H1 (cell line): ENCODE measurements at regions of chr12 and their contacts with region 1.

Region 1: DNA sequence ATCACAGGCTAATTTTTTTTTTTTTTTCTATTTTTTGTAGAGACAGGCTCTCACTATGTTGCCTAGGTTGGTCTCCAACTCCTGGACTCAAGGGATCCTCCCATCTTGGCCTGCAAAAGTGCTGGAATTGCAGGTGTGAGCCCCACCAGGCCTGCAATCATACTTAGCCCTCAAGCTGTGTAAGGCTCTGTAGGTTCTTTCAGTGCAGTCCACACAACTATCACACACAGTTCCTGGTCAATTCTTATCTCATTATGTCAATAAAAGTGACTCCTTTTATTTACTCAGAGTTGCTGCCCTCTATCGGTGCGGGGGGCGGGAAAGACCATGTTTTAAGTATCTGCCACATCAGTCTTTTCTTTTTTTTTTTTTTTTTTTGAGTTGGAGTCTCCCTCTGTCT is 29.0 kb downstream of the SLC2A3 start:
- DNase-seq: peak; percentile 49 to 58
- H3K4me3 ChIP-seq: no peak overlapping the region
- H3K27ac ChIP-seq: peak overlapping the region; percentile 82
- H3K4me1 ChIP-seq: peaks cover 2 to 12% (median 6%) of the 10 kb centered on the region in 4 experiments; a peak in 5 of 7 replicates
- H3K27me3 ChIP-seq: no peaks in the 10 kb centered on the region
- CTCF ChIP-seq: peak in 2 of 3 experiments; percentile 34 to 49; a peak in 3 of 4 replicates
- EP300 ChIP-seq: no peak
- POLR2A ChIP-seq: no peak
- RAD21 ChIP-seq: peak; percentile 33 to 56; a peak in 3 of 4 replicates

Region 2: GRCh38 chr12:7303230-7303629 is 603.8 kb before region 1 on chr12:
- CTCF ChIA-PET with region 1: no interaction called
- POLR2A ChIA-PET with region 1: no interaction called
- DNase-seq: no peak
- H3K4me3 ChIP-seq: no peak overlapping the region
- H3K27ac ChIP-seq: no peak overlapping the region
- H3K4me1 ChIP-seq: peaks cover 0 to 7% (median 2%) of the 10 kb centered on the region in 4 experiments; a peak in 2 of 7 replicates
- H3K27me3 ChIP-seq: no peaks in the 10 kb centered on the region
- CTCF ChIP-seq: no peak
- EP300 ChIP-seq: no peak
- POLR2A ChIP-seq: no peak
- RAD21 ChIP-seq: no peak

Region 3: DNA sequence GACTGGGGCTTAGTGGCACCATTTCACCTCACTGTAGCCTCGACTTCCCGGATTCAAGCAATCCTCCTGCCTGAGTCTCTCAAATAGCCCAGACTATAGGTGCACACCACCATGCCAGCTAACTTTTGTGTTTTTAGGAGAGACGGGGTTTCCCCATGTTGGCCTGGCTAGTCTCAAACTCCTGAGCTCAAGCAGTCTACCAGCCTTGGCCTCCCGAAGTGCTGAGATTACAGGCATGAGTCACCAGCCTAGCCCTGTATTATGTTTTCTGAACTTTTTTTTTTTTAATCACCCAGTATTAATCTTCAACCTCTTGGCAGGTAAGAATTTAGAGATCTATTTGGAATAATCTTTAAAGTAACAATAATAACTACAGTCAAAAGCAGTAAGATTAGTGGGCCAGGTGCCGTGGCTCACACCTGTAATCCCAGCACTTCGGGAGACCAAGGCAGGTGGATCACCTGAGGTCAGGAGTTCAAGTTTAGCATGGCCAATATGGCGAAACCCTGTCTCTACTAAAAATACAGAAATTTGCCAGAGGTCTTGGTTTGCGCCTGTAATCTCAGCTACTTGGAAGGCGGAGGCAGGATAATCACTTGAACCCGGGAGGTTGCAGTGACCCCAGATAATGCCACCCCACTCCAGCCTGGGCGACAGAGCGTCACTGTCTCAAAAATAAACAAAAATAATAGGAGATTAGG is 109.2 kb before region 1 on chr12:
- CTCF ChIA-PET with region 1: interaction called, 3 read pairs
- POLR2A ChIA-PET with region 1: interaction called, 23 read pairs
- DNase-seq: no peak
- H3K4me3 ChIP-seq: peak overlapping the region in 1 of 4 experiments; percentile 44; a peak in 1 of 8 replicates
- H3K27ac ChIP-seq: peak overlapping the region; percentile 69; the same call in 1 of the 2 replicates
- H3K4me1 ChIP-seq: peaks cover 6 to 18% (median 13%) of the 10 kb centered on the region in 4 experiments
- H3K27me3 ChIP-seq: no peaks in the 10 kb centered on the region
- CTCF ChIP-seq: no peak
- EP300 ChIP-seq: no peak
- POLR2A ChIP-seq: no peak
- RAD21 ChIP-seq: no peak

Region 4: DNA sequence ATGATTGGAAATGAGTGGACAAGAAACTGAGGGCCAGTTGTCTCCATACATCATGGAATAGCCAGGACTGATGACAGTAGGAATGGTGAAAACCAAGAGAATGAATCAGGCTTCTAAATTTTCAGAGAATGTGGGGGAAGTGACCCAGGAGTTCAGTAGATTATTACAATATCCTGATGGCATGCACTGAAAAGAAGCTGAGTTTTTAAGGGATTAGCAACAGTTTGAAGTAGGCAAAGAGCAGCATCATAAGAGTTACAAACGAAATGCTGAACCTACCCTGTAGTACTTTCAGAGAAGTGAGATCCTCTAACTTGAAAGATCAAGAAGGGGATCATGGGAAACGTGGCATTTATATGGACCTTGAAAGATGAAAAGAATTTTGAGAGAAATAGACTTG is 47.5 kb before region 1 on chr12:
- CTCF ChIA-PET with region 1: interaction called, 11 read pairs
- POLR2A ChIA-PET with region 1: interaction called, 9 read pairs
- DNase-seq: no peak
- H3K4me3 ChIP-seq: no peak overlapping the region
- H3K27ac ChIP-seq: no peak overlapping the region
- H3K4me1 ChIP-seq: peaks cover 0 to 11% (median 3%) of the 10 kb centered on the region in 4 experiments; a peak in 3 of 7 replicates
- H3K27me3 ChIP-seq: no peaks in the 10 kb centered on the region
- CTCF ChIP-seq: no peak
- EP300 ChIP-seq: no peak
- POLR2A ChIP-seq: no peak
- RAD21 ChIP-seq: no peak

Region 5: GRCh38 chr12:7884689-7885088 is 22.3 kb before region 1 on chr12:
- CTCF ChIA-PET with region 1: interaction called, 6 read pairs
- POLR2A ChIA-PET with region 1: interaction called, 40 read pairs
- DNase-seq: no peak
- H3K4me3 ChIP-seq: no peak overlapping the region
- H3K27ac ChIP-seq: no peak overlapping the region
- H3K4me1 ChIP-seq: peaks cover 0 to 2% (median 0%) of the 10 kb centered on the region in 4 experiments; a peak in 1 of 7 replicates
- H3K27me3 ChIP-seq: no peaks in the 10 kb centered on the region
- CTCF ChIP-seq: no peak
- EP300 ChIP-seq: no peak
- POLR2A ChIP-seq: no peak
- RAD21 ChIP-seq: no peak

Region 6: DNA sequence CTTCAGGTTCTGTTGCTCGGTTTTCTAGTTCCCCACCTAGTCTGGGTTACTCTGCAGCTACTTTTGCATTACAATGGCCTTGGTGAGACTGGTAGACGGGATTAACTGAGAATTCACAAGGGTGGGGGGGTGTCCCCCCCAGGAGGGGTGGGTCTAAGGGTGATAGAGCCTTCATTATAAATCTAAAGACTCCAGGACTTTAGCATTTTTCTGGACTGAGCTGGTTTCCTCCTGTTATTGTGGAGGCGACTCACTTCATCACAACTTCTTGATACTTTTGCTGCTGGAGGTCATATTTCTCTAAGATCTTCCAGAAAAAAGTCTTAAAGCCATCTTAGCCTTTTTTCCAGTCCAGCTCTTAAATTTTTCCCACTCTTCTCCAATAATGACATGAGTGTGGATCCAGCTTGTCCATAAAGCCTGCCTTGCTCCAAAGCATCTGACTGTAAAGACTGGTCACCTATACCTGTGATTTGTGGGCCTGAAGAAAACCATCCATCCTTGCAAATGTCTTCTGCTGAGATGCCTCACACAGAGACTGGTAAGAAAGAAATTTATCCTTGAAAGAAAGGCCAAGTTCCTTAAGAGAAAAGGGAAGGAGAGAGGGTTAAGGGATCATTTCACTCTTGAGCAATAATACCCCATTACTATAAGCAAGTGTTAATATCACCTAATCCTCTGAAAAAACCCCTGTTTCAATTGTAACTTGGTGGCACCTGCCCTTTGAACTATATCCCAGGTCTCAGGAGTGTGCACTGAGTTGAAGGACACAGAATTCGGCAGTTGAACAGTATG is 14.6 kb before region 1 on chr12:
- CTCF ChIA-PET with region 1: interaction called, 37 read pairs
- POLR2A ChIA-PET with region 1: interaction called, 40 read pairs
- DNase-seq: no peak
- H3K4me3 ChIP-seq: peak overlapping the region in 1 of 4 experiments; percentile 22; a peak in 1 of 8 replicates
- H3K27ac ChIP-seq: no peak overlapping the region
- H3K4me1 ChIP-seq: peaks cover 4 to 15% (median 8%) of the 10 kb centered on the region in 4 experiments; a peak in 5 of 7 replicates
- H3K27me3 ChIP-seq: no peaks in the 10 kb centered on the region
- CTCF ChIP-seq: no peak
- EP300 ChIP-seq: no peak
- POLR2A ChIP-seq: no peak
- RAD21 ChIP-seq: no peak

Region 7: GRCh38 chr12:7923241-7924236 is 16.5 kb after region 1 on chr12:
- CTCF ChIA-PET with region 1: interaction called, 13 read pairs
- POLR2A ChIA-PET with region 1: interaction called, 20 read pairs
- DNase-seq: no peak
- H3K4me3 ChIP-seq: no peak overlapping the region
- H3K27ac ChIP-seq: no peak overlapping the region
- H3K4me1 ChIP-seq: no peaks in the 10 kb centered on the region
- H3K27me3 ChIP-seq: no peaks in the 10 kb centered on the region
- CTCF ChIP-seq: no peak
- EP300 ChIP-seq: no peak
- POLR2A ChIP-seq: peak in 1 of 2 experiments; percentile 43; a peak in 1 of 3 replicates
- RAD21 ChIP-seq: no peak